B cell (primary cell): ENCODE measurements at regions of chr22 and their contacts with region 1.

Region 1: GRCh38 chr22:18001040-18001893 is 23.1 kb downstream of the MICAL3 start:
- DNase-seq: peak; percentile 94
- ATAC-seq: peak; percentile 68
- H3K4me3 ChIP-seq: peak overlapping the region; percentile 56 to 87 (median 70)
- H3K4me3 Mint-ChIP-seq: peak overlapping the region; percentile 96
- H3K27ac ChIP-seq: peak overlapping the region; percentile 87 to 95
- H3K27ac Mint-ChIP-seq: peak overlapping the region; percentile 100
- H3K4me1 ChIP-seq: peaks cover 78 to 83% of the 10 kb centered on the region in 2 donors
- H3K4me1 Mint-ChIP-seq: peaks cover 77% of the 10 kb centered on the region
- H3K27me3 ChIP-seq: no peaks in the 10 kb centered on the region
- H3K27me3 Mint-ChIP-seq: no peaks in the 10 kb centered on the region
- CTCF ChIP-seq: peak; percentile 60

Region 2: DNA sequence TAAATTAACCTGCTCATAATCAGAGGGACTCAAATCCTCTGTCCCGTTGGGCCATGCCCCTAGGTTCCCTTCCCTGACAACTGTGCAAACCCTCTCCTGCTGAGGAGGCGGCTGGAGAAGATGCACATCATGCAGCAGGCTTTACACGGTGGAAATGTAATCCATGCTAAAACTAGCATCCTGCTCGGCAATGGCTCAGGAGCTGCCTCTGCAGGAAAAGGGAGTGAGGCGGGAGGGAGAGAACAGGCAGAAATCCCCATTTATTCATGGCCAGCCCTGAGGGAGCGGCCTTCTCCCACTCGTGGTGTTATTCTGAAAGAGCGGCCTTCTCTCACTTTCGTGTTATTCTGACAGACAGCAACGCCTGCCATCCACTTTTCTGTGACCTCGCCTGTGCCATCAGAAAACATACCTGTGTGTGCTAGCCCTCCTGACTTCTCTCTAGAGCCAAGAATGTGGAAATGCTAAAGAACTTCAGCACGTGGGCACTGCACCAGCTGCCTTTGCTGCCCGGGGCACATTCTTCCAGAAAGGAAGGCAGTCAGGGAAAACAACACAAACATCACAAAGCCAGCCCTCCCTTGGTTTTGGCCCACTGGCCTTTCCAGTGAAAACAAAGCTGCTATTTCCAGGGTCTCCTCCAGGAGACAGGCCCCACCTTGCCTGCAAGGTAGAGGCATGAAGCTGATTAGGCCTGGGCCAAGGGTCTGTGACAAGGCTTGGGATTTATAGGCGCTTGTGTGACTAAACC is 164.1 kb before region 1 on chr22:
- CTCF ChIA-PET with region 1: no interaction called
- POLR2A ChIA-PET with region 1: no interaction called
- intact Hi-C with region 1: no loop called
- DNase-seq: no peak
- ATAC-seq: no peak
- H3K4me3 ChIP-seq: no peak overlapping the region
- H3K4me3 Mint-ChIP-seq: no peak overlapping the region
- H3K27ac ChIP-seq: no peak overlapping the region
- H3K27ac Mint-ChIP-seq: no peak overlapping the region
- H3K4me1 ChIP-seq: no peaks in the 10 kb centered on the region
- H3K4me1 Mint-ChIP-seq: no peaks in the 10 kb centered on the region
- H3K27me3 ChIP-seq: no peaks in the 10 kb centered on the region
- H3K27me3 Mint-ChIP-seq: no peaks in the 10 kb centered on the region
- CTCF ChIP-seq: no peak

Region 3: GRCh38 chr22:17853073-17853472 is 148.2 kb before region 1 on chr22:
- CTCF ChIA-PET with region 1: no interaction called
- POLR2A ChIA-PET with region 1: interaction called, 10 read pairs
- intact Hi-C with region 1: no loop called
- DNase-seq: no peak
- ATAC-seq: no peak
- H3K4me3 ChIP-seq: no peak overlapping the region
- H3K4me3 Mint-ChIP-seq: no peak overlapping the region
- H3K27ac ChIP-seq: no peak overlapping the region
- H3K27ac Mint-ChIP-seq: no peak overlapping the region
- H3K4me1 ChIP-seq: no peaks in the 10 kb centered on the region
- H3K4me1 Mint-ChIP-seq: no peaks in the 10 kb centered on the region
- H3K27me3 ChIP-seq: no peaks in the 10 kb centered on the region
- H3K27me3 Mint-ChIP-seq: no peaks in the 10 kb centered on the region
- CTCF ChIP-seq: no peak

Region 4: DNA sequence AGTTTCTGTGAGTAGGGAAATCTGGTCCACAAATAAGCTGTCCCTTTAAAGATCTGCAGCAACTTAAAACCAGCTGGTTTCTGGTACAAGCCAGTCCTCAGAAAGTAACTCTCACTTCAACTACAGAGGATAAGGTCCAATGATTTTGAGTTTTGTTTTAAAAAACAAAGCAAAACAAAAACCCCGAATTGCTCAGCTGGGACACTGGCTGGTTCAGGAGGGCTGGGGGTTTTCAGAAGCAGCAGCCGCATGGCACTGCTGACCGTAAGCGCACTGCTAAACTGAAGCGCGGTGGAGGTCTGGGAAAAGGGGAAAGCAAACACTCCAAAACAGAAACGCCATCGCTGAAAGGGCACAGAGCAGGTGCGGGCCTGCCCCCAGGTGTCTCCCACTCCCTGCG is 36.6 kb before region 1 on chr22:
- CTCF ChIA-PET with region 1: interaction called, 4 read pairs
- POLR2A ChIA-PET with region 1: interaction called, 18 read pairs
- intact Hi-C with region 1: loop called (anchors 1 kb)
- DNase-seq: peak; percentile 81
- ATAC-seq: peak; percentile 86
- H3K4me3 ChIP-seq: peak overlapping the region in 3 of 5 experiments; percentile 18 to 44 (median 42)
- H3K4me3 Mint-ChIP-seq: peak overlapping the region; percentile 82
- H3K27ac ChIP-seq: peak overlapping the region; percentile 79 to 80
- H3K27ac Mint-ChIP-seq: peak overlapping the region; percentile 90
- H3K4me1 ChIP-seq: peaks cover 50 to 73% of the 10 kb centered on the region in 2 donors
- H3K4me1 Mint-ChIP-seq: peaks cover 82% of the 10 kb centered on the region
- H3K27me3 ChIP-seq: no peaks in the 10 kb centered on the region
- H3K27me3 Mint-ChIP-seq: no peaks in the 10 kb centered on the region
- CTCF ChIP-seq: no peak

Region 5: DNA sequence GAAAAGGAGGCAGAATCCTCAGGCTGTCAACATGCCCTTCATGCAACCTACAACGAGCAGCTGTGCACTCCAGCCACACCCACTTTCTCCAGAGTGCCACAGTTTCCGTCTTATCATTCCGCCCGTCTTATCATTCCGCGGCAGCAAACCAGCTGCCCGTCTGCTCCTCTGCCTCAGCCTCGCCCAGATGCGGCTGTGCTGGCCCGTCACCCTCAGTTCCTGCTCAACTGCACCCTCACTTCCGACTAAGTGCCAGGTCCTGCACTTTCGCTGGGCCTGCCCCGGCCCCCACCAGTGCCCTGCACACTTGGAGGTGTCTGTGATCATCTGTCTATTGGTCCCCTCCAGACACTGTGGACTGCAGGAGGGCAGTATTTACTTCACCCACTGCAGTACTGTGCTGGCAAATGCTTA is 20.6 kb before region 1 on chr22:
- CTCF ChIA-PET with region 1: interaction called, 5 read pairs
- POLR2A ChIA-PET with region 1: interaction called, 18 read pairs
- intact Hi-C with region 1: no loop called
- DNase-seq: peak; percentile 66
- ATAC-seq: peak; percentile 79
- H3K4me3 ChIP-seq: peak overlapping the region in 2 of 5 experiments; percentile 19 to 48
- H3K4me3 Mint-ChIP-seq: peak overlapping the region; percentile 86
- H3K27ac ChIP-seq: peak overlapping the region; percentile 63 to 82
- H3K27ac Mint-ChIP-seq: peak overlapping the region; percentile 95
- H3K4me1 ChIP-seq: peaks cover 58 to 82% of the 10 kb centered on the region in 2 donors
- H3K4me1 Mint-ChIP-seq: peaks cover 74% of the 10 kb centered on the region
- H3K27me3 ChIP-seq: no peaks in the 10 kb centered on the region
- H3K27me3 Mint-ChIP-seq: no peaks in the 10 kb centered on the region
- CTCF ChIP-seq: no peak

Region 6: DNA sequence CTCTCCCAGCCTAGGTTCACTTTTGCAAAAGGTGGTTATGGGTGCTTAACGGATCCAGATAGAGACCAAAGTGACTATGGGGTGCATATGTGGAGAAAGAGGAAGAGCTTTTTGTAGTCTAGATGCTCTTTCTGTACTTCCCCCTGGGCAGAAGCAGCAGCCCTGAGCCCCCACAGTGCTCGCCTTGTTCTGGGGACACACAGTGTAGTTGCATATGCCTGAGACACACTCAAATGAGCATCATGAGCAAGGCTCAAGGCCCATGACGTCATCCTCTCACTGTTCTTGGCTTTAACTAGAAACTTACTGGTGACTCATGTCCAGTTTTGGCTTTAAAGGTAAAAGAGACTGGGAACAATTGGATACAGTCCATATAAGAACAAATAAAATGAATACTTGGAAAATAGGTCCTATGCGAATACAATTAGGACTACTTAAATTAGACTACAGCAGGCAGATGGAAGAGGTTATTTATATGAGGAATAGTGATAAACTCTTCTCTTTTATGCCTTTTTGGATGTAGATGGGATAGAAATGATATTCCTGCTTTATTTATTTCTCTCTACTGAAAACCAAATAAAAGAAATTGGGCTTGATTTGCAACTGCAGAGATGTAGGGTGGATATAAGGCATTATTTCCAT is 56.4 kb after region 1 on chr22:
- CTCF ChIA-PET with region 1: interaction called, 16 read pairs
- POLR2A ChIA-PET with region 1: interaction called, 8 read pairs
- intact Hi-C with region 1: loop called (anchors 2 kb)
- DNase-seq: peak; percentile 93
- ATAC-seq: peak; percentile 81
- H3K4me3 ChIP-seq: peak overlapping the region in 4 of 5 experiments; percentile 27 to 47 (median 38)
- H3K4me3 Mint-ChIP-seq: peak overlapping the region; percentile 86
- H3K27ac ChIP-seq: peak overlapping the region; percentile 97 to 99
- H3K27ac Mint-ChIP-seq: peak overlapping the region; percentile 99
- H3K4me1 ChIP-seq: peaks cover 30 to 43% of the 10 kb centered on the region in 2 donors
- H3K4me1 Mint-ChIP-seq: peaks cover 41% of the 10 kb centered on the region
- H3K27me3 ChIP-seq: no peaks in the 10 kb centered on the region
- H3K27me3 Mint-ChIP-seq: no peaks in the 10 kb centered on the region
- CTCF ChIP-seq: no peak